ENCODE measurements at regions of chr16 and their contacts with region 1.

Region 1: GRCh38 chr16:53091466-53092211 is 36.8 kb downstream of the CHD9 start:
- DNase-seq: peak; percentile 62
- CTCF ChIP-seq: no peak

Region 2: GRCh38 chr16:53080345-53081031 is 11.2 kb before region 1 on chr16:
- CTCF ChIA-PET with region 1: interaction called, 16 read pairs
- POLR2A ChIA-PET with region 1: no interaction called
- DNase-seq: no peak
- CTCF ChIP-seq: no peak

Region 3: DNA sequence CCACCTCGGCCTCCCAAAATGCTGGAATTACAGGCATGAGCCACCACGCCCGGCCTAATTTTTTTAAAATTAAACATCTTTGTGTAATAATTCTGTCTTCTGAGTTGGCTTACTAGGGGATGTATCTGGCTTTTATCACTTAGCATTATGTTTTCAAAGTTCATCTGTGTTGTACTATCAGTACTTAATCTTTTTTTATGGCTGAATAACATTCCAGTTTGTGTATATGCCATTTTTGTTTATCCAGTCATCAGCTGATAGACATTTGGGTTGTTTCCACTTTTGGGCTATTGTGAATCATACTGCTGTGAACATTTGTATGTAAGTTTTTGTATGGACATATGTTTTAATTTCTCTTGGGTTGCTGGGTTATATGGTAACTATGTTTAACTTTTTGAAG is 32.1 kb after region 1 on chr16:
- CTCF ChIA-PET with region 1: no interaction called
- POLR2A ChIA-PET with region 1: no interaction called
- DNase-seq: no peak
- CTCF ChIP-seq: no peak

Measured in GM10248 (cell line).